ENCODE measurements at regions of chr3 and their contacts with region 1.

Region 1: GRCh38 chr3:112293368-112294321 is at the start of gene SLC9C1:
- DNase-seq: peak; percentile 70 to 71
- H3K4me3 ChIP-seq: no peak within 1 kb of the TSS
- H3K4me1 ChIP-seq: peaks cover 26% of the 10 kb centered on the region
- H3K27me3 ChIP-seq: no peaks in the 10 kb centered on the region

Region 2: DNA sequence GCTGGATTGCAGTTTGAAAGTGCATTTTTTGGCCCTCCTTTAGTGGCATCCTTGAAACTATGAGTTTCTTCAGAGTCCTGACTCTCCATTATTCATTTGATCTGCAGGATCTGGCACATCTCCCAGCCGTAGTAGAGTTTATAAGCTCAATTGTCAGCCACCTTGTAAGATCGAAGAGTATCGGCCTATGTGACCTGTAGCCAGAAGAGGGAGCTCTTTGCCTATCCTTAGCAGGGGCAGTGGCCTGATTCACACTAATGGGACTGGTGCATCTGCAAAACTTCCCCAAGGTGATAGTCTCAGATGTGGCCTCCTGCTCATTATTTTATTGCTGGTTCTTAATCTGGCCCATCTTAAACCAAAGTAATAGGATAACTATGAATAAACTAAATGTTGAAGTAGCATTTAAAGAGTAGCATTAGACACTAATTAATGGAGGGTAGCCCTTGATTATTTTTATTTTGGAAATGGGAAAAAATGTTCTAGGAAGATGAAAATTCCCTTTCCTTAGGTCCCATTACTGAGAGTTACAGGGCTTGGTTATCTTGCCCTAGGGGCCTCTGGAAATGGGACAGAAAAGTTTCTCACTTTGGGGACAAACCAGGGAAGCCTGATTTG is 181.8 kb before region 1 on chr3:
- in situ Hi-C with region 1: loop called (anchors 25 kb)
- DNase-seq: peak; percentile 76 to 77
- H3K4me3 ChIP-seq: no peak overlapping the region
- H3K4me1 ChIP-seq: no peaks in the 10 kb centered on the region
- H3K27me3 ChIP-seq: no peaks in the 10 kb centered on the region

Region 3: DNA sequence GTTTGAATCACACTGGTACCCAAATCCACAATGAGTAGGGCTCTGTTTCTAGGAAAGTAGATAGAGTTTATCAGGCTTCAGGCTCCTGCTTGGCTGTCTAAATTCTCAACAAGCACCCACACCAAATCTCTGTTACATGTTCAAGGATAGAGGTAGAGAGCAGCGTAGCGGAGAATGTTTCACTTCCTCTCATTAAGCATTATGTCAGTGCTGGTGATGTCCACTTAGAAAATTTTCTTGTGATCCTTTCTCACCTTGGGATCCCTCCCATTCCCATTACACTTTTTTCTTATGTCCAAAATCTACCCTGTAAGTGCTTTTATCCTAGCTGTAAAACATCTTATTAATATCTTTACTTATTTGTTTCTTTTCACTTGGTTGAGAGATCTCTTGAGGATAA is 125.9 kb before region 1 on chr3:
- in situ Hi-C with region 1: no loop called
- DNase-seq: no peak
- H3K4me3 ChIP-seq: no peak overlapping the region
- H3K4me1 ChIP-seq: no peaks in the 10 kb centered on the region
- H3K27me3 ChIP-seq: no peaks in the 10 kb centered on the region

Measured in HAP-1 (cell line).